Activated CD4-positive, alpha-beta memory T cell treated with anti-CD3 and anti-CD28 coated beads, Interleukin-2, amount 10 ng/mL, durations not matched to agents 7 days and 5 days (primary cell): ENCODE measurements at regions of chr12 and their contacts with region 1.

Region 1: DNA sequence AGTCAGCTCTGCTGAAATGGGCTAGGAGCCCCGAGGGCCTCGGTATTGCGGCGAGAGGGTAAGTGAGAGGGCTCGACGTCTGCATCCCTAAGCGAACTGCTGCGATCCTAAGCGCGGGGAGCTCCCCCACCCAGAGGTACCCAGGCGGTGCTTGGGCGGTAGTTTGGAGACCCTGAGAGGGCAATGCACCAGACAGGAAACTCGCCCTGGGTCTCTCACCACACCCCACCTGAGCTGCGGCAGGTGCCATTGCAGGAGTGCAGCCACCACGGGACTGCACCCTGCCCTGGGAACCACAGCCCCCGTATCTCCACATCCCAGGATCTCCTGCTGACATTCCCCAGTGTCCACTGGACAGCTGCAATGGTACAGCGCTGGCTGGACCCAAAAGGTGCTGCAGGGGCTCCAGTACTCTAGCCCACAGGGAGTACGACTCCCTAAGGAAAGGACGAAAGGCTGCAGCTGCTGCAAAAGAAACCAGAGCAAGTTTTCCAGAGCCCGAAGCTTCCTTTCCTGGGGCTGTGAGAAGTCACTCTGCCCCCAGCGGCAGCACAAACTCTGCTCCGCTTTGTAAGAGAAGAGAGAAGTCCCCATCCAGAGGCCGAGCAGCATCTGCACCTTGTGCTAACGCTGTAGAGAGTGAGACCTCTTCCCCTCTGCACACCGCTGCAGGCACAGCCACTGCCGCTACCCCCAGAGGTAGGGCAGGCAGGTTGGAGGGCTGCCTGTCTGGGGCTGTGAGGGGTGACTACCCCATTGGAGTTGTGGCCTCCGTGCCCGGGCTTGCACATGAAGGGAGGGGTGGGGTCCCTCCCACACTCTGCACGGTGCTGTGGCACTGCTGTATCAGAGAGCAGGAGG is 31.1 kb upstream of the MON2 start:
- DNase-seq: peak; percentile 42
- H3K4me3 Mint-ChIP-seq: peak overlapping the region; percentile 58
- H3K27ac Mint-ChIP-seq: no peak overlapping the region
- H3K4me1 Mint-ChIP-seq: peaks cover 20% of the 10 kb centered on the region
- H3K27me3 Mint-ChIP-seq: peaks cover 44% of the 10 kb centered on the region

Region 2: GRCh38 chr12:62466594-62467491 is 31.3 kb after region 1 on chr12 and contains the start of gene MON2:
- CTCF ChIA-PET with region 1: interaction called, 5 read pairs
- POLR2A ChIA-PET with region 1: interaction called, 14 read pairs
- DNase-seq: peak; percentile 87
- H3K4me3 Mint-ChIP-seq: peak within 1 kb of the TSS; percentile 88
- H3K27ac Mint-ChIP-seq: peak within 1 kb of the TSS; percentile 88
- H3K4me1 Mint-ChIP-seq: peaks cover 25% of the 10 kb centered on the region
- H3K27me3 Mint-ChIP-seq: peaks cover 3% of the 10 kb centered on the region
- total RNA-seq, gene MON2: 42.0 to 45.0 TPM

Region 3: DNA sequence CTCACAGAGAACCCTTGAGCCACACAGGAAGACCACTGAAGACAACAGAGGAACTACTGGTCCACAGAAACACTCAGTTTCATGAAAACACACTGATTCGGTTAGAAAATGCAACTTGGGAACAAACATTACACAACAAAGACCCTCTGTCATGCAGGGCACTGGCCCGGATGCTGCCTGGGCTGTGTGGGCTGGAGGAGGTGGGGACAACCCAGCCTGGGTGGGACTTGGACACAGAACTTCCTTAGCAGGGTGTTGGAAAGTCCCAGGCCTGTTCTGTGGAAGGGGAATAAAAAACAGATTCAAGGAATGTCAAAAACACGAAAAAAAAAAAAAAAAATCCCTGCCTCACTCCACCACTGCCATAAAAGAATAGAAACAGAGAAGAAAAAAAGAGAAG is 212.1 kb after region 1 on chr12:
- CTCF ChIA-PET with region 1: no interaction called
- POLR2A ChIA-PET with region 1: no interaction called
- DNase-seq: no peak
- H3K4me3 Mint-ChIP-seq: no peak overlapping the region
- H3K27ac Mint-ChIP-seq: no peak overlapping the region
- H3K4me1 Mint-ChIP-seq: no peaks in the 10 kb centered on the region
- H3K27me3 Mint-ChIP-seq: no peaks in the 10 kb centered on the region

Region 4: GRCh38 chr12:62813031-62813829 is 377.7 kb after region 1 on chr12:
- CTCF ChIA-PET with region 1: interaction called, 13 read pairs
- POLR2A ChIA-PET with region 1: no interaction called
- DNase-seq: peak; percentile 49
- H3K4me3 Mint-ChIP-seq: no peak overlapping the region
- H3K27ac Mint-ChIP-seq: no peak overlapping the region
- H3K4me1 Mint-ChIP-seq: peaks cover 7% of the 10 kb centered on the region
- H3K27me3 Mint-ChIP-seq: peaks cover 22% of the 10 kb centered on the region